Astrocyte of the cerebellum (primary cell): ENCODE measurements at regions of chr19 and their contacts with region 1.

Region 1: GRCh38 chr19:5250127-5250659 is 90.4 kb downstream of the PTPRS start:
- DNase-seq: no peak
- H3K4me3 ChIP-seq: no peak overlapping the region
- CTCF ChIP-seq: no peak

Region 2: DNA sequence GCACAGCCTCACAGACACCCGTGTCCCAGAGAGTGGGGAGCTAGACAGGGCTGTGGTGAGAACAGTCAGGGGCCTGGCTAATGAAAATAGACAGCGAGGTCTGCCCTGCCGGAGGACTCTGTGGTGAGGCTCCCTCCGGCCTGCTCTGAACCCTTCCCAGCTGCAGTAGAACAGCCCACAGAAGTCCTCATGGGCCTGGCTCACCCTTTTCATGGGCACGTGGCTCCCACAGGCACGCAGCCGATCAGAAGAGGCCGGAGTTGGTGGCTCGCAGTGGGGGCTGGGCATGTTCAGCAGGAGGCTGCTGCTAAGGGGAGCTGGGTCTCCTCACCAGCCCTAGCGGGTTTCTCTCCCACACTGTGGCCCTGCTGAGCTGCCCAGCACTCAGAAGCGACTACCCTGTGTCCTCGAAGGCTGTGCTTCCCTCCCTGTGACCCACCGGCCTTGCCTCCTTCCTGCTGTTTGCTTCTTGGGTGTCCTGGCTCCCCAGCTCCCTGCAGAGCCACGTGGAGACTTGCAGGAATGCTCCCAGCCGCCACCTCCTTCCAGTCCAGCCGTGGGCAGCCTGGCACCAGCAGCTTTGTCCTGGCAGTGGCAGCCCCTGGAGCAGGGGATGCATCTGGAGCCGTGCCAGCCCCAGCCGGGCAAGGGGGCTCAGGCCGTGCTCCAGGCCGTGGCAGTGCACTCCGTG is 142.6 kb before region 1 on chr19:
- in situ Hi-C with region 1: no loop called
- DNase-seq: no peak
- H3K4me3 ChIP-seq: no peak overlapping the region
- CTCF ChIP-seq: no peak

Region 3: GRCh38 chr19:5205381-5205780 is 44.8 kb before region 1 on chr19:
- in situ Hi-C with region 1: loop called (anchors 10 kb)
- DNase-seq: no peak
- H3K4me3 ChIP-seq: no peak overlapping the region
- CTCF ChIP-seq: no peak

Region 4: DNA sequence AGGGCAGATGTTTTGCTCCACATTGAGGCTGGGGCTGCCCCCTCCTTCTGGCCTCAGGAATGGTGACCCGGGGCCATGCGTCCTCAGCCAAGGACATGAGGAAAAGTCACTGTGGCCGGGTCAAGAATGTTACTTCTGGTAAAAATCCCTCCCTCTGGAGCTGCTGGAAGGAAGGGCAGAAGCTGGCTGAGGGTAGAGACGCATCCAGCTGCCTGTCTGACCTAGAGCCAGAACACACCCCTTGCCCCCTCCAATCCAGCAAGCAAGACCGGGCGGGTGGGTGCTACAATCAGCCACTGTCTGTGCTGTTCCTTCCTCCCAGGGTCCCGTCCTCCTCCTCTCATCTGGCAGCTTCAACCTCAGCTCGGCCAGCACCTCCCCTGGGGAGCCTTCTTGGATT is 31.4 kb after region 1 on chr19:
- in situ Hi-C with region 1: no loop called
- DNase-seq: no peak
- H3K4me3 ChIP-seq: no peak overlapping the region
- CTCF ChIP-seq: no peak

Region 5: DNA sequence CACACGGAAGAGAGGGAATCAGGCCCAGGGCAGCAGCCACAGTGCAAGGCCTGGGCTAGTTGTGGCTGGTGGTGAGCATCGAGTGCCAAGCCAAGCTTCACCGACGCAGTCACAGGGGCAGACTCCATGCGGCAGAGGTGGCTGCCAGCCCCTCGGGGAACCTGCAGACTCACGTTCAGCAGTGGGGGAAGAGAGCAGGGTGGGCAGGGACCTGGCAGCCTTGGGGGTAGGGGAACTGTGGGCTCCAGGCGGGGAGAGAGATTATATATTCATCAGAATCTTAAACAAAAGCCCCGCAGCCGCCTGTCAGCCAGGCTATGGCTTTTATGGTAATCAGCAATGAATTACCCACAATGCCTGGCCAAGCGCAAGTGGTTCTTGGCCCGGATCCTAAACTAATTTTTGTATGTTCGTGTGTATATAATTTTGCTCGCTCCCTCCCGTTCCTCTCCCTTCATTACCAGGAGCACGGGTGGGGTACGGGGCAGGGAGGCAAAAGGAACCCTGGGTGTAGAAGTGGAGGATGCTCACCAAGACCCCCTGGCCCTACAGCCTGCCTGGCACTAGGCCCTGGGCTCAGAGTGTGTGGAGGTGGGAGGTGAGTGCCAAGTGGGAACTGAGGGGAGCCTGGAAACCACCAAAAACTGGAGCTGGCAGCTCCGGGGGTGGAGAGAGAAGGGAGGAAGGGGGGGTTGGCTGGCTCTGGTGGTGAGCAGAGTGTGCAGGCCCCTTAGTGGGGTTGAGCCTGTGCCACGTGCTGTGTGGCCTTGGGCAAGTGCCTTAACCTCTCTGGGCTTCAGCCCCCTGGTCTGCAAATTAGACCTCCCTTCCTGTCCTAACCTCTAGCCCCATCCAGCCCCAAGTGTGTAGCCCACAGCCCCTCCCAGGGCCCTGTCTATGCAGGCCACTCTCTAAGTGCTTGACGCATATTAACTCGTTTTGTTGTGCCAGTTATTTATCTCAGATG is 58.6 kb after region 1 on chr19:
- in situ Hi-C with region 1: no loop called
- DNase-seq: peak; percentile 79
- H3K4me3 ChIP-seq: peak overlapping the region; percentile 7
- CTCF ChIP-seq: no peak

Region 6: DNA sequence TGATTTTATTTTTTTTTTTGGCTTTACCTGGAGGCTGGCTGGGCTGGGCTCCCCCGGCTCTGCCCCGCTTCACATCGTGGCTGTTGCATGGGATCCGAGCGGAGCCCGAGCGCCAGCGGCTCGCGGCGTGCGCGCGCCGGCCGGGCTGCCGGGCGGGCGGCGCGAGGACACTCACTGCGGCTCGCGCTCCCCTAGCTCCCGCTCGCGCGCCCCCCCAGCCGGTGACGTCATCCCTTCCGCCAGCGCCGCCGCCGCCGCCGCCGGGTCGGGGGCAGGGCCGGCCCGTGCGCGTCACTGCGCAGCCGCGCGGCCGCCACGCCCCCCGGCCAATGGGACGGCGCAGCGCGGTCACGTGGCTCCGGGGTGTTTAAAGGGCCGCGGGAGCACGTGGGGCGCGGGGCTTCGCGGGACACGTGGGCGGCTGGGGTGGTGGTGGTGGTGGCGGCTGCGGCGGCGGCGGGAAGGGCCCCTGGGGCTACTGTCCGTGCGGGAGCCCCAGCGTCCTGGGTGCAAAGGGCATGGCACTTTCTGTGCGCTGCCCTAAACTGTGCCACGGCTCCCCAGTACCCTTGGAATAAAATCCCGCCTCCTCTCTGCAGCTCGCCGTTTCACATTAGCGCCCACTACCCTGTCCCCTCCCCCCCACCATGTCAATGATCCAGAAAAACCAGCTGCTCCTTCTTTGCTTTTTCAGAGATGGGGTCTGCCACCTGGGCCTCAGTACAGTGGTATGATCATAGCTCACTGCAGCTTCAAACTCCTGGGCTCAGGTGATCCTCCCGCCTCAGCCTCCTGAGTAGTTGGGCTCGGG is 90.6 kb after region 1 on chr19 and contains the start of gene PTPRS:
- in situ Hi-C with region 1: loop called (anchors 10 kb)
- DNase-seq: peak; percentile 23
- H3K4me3 ChIP-seq: peak within 1 kb of the TSS; percentile 65
- CTCF ChIP-seq: no peak

Region 7: DNA sequence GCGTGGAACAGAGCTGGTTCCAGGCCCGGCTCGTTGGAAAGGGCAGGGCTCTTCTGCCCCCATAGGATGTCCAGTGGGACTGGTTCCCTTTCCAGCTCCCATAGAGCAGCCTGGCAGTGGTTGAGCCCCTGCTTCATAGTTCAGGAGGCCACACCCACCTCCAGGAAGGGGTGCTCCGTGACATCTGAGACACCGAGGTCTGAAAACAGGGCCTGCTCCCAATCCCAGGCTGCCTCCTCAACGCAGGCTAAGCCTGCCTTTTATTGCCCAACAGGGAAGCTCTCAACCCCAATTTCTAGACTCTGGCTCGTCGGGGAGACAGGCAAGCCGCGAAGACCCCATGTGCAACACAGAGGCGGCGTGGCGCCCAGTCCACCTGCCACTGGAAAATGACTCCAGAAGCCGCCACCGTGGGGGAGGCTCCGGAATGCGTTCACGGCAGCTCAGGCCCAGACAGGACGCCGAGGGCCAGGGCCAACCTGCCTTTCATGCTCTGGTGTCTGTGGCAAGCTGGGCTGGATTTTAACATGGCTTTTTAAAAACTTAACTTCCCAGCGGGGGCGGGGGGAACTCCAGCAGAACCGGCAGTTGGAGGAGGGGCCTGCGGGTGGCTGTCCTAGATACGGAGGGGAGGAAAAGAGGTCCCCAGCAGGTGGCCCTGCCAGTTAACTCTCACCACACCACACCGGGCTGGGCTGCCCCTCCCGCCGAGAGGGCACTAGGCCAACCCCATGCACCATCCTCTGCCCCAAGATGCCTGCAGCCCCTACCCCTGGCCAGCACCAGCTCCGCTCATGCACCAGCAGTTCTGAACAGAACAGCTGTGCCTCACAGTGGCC is 335.5 kb after region 1 on chr19:
- in situ Hi-C with region 1: loop called (anchors 10 kb)
- DNase-seq: no peak
- H3K4me3 ChIP-seq: no peak overlapping the region
- CTCF ChIP-seq: no peak